HEK293 (cell line): ENCODE measurements at regions of chr6 and their contacts with region 1.

Region 1: GRCh38 chr6:75526502-75527127 is 33.0 kb upstream of the FILIP1 start:
- H3K4me3 ChIP-seq: no peak overlapping the region
- H3K27ac ChIP-seq: no peak overlapping the region
- H3K4me1 ChIP-seq: peaks cover 20% of the 10 kb centered on the region
- CTCF ChIP-seq: peak; percentile 51

Region 2: DNA sequence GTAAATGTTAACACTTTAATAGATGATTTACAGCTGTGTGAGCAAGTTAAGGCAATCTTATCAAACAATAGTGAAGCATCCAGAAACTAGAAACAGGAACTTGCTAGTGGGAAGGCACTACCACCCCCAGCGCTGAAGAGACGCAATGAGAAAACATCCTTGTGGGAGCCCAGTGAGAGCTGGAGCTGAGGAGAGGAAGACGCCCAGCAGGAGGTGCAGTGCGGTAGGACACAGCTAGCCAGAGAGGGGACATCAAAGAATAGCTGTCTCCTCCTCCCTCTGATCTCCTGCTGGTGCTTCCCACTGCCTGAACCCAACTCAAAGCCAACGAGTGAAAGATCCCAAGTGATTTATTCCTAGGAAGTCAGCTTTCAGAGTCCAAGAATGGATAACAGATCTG is 461.1 kb before region 1 on chr6:
- CTCF ChIA-PET with region 1: no interaction called
- POLR2A ChIA-PET with region 1: no interaction called
- H3K4me3 ChIP-seq: no peak overlapping the region
- H3K27ac ChIP-seq: no peak overlapping the region
- H3K4me1 ChIP-seq: no peaks in the 10 kb centered on the region
- CTCF ChIP-seq: no peak

Region 3: DNA sequence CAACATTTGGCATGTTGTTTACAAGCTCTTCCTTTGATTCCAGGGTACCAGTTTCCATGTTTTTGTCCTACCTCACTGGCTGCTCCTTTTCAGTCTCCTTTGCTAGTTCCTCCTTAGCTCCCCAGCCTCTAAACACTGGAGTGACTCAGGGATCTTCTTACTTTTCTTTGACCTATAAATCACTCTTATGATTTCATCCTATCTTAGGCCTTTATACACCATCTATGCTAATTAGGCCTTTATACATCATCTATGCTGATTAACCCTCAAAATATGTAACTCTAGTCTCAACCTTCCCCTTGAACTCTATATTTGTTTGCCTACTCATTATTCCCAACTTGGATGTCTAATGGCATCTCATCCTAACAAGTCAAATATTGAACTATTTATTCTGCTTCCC is 251.5 kb before region 1 on chr6:
- CTCF ChIA-PET with region 1: interaction called, 12 read pairs
- POLR2A ChIA-PET with region 1: no interaction called
- H3K4me3 ChIP-seq: no peak overlapping the region
- H3K27ac ChIP-seq: no peak overlapping the region
- H3K4me1 ChIP-seq: peaks cover 13% of the 10 kb centered on the region; the same call in 1 of the 2 replicates
- CTCF ChIP-seq: no peak

Region 4: GRCh38 chr6:75296811-75297779 is 229.5 kb before region 1 on chr6:
- CTCF ChIA-PET with region 1: interaction called, 34 read pairs
- POLR2A ChIA-PET with region 1: interaction called, 3 read pairs
- H3K4me3 ChIP-seq: no peak overlapping the region
- H3K27ac ChIP-seq: no peak overlapping the region
- H3K4me1 ChIP-seq: no peaks in the 10 kb centered on the region
- CTCF ChIP-seq: peak; percentile 47; the same call in 1 of the 2 replicates

Region 5: DNA sequence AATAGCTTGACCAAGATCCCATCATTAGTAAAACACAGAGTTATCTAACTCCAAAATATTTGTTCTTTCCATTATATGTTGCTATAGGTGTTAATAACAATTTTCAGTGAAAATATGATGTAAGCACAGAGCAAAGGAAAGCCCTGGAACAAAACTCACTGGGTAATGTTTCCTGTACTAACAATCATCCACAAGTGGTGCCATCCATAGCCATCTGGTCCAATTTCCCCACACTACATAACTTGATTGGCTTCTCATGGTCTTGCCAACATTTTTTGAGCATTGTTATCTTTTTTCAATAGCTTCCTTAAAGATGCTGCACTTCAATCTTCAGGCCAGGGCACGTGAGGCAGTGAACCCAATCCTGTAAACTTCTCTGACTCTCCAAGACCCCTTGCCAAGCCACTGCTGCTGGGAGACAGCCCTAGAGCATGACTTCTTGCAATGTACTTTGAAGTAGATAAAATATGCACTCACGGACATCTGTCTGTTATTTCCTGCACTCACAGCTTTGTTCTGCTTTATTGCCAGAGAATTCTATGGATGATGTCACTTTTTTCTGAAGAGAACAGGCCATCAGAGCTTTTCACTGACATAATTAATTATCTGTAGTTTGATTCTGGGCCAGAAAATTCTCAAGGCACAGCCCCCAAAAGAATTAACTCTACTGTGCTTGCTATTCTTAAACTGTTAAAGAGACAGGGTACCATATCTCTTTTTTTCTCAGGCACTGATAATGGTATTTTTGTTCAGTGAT is 144.6 kb before region 1 on chr6:
- CTCF ChIA-PET with region 1: interaction called, 9 read pairs
- POLR2A ChIA-PET with region 1: interaction called, 14 read pairs
- H3K4me3 ChIP-seq: no peak overlapping the region
- H3K27ac ChIP-seq: no peak overlapping the region
- H3K4me1 ChIP-seq: peaks cover 12% of the 10 kb centered on the region
- CTCF ChIP-seq: no peak

Region 6: DNA sequence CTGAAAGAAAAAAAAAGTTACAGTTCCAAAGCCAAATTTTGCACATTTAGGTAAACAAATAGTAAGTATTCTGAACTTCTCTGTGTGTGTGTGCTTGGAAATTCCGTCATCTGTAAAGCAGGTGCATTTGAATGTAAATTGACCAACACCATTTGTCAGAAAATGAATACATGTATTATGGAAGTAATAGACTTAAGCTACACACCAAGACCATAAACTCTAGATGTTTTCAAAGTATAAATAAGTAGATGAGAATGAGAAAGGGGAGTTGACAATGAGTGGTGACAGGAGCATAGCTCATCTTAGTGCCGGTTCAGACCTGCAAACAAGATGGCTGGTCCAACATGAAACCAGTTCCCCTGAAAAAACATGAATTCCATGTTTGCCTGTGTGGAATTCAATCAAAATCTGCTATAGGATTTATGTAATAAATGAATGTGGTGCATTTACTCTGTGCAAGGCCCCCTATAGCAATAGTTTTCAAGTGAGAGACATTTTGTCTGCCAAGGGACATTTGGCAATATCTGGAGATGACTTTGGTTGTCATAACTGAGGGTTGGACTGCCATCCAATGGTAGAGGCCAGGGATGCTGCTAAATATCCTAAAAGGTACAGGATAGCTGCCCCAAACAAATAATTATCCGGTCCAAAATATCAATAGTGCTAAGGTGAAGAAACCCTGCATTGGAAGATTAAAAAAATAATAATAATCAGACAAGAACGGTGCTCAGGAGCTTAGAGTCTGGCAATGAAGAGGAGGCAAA is 22.0 kb before region 1 on chr6:
- CTCF ChIA-PET with region 1: interaction called, 11 read pairs
- POLR2A ChIA-PET with region 1: interaction called, 4 read pairs
- H3K4me3 ChIP-seq: no peak overlapping the region
- H3K27ac ChIP-seq: no peak overlapping the region
- H3K4me1 ChIP-seq: no peaks in the 10 kb centered on the region
- CTCF ChIP-seq: peak; percentile 59

Region 7: GRCh38 chr6:75579951-75580350 is 53.3 kb after region 1 on chr6:
- CTCF ChIA-PET with region 1: no interaction called
- POLR2A ChIA-PET with region 1: no interaction called
- H3K4me3 ChIP-seq: no peak overlapping the region
- H3K27ac ChIP-seq: no peak overlapping the region
- H3K4me1 ChIP-seq: no peaks in the 10 kb centered on the region
- CTCF ChIP-seq: no peak

Region 8: GRCh38 chr6:75673885-75674284 is 147.3 kb after region 1 on chr6:
- CTCF ChIA-PET with region 1: no interaction called
- POLR2A ChIA-PET with region 1: no interaction called
- H3K4me3 ChIP-seq: no peak overlapping the region
- H3K27ac ChIP-seq: no peak overlapping the region
- H3K4me1 ChIP-seq: no peaks in the 10 kb centered on the region
- CTCF ChIP-seq: no peak

Region 9: DNA sequence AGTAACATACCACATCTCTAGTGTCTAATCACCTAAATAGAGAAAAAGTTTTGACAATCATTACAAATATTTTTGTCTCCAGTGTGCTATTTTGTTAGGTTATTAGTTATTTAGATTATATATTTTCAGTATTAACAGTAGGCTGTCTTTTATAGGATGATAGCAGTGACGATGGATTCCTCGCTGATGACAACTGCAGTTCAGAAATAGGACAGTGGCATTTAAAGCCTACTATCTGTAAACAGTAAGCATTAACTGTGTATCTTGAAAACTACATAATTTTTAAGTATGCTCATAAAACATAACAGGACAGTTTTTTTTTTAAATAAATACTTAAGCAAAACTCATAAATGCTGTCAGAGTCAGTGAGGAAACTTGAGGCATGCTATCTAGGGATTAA is 184.6 kb after region 1 on chr6:
- CTCF ChIA-PET with region 1: no interaction called
- POLR2A ChIA-PET with region 1: no interaction called
- H3K4me3 ChIP-seq: no peak overlapping the region
- H3K27ac ChIP-seq: no peak overlapping the region
- H3K4me1 ChIP-seq: no peaks in the 10 kb centered on the region
- CTCF ChIP-seq: no peak